ENCODE measurements at regions of chr10 and their contacts with region 1.

Region 1: GRCh38 chr10:104353325-104354048 is at the start of gene CFAP58:
- DNase-seq: peak; percentile 95 to 98 (median 96)
- H3K4me3 ChIP-seq: peak within 1 kb of the TSS in 1 of 4 donors; percentile 63
- H3K27ac ChIP-seq: peak within 1 kb of the TSS in 1 of 5 donors; percentile 33
- H3K4me1 ChIP-seq: peaks cover 16 to 29% of the 10 kb centered on the region in 2 donors
- H3K27me3 ChIP-seq: no peaks in the 10 kb centered on the region
- CTCF ChIP-seq: peak; percentile 55 to 86 (median 62)
- POLR2A ChIP-seq: peak in 1 of 2 donors; percentile 55
- total RNA-seq, gene CFAP58: 0.11 to 2.9 (median 0.83) TPM

Region 2: GRCh38 chr10:103685880-103686669 is 667.4 kb before region 1 on chr10:
- intact Hi-C with region 1: no loop called
- DNase-seq: peak; percentile 69 to 92 (median 78)
- H3K4me3 ChIP-seq: no peak overlapping the region
- H3K27ac ChIP-seq: peak overlapping the region in 2 of 5 donors; percentile 26 to 68
- H3K4me1 ChIP-seq: no peaks in the 10 kb centered on the region
- H3K27me3 ChIP-seq: no peaks in the 10 kb centered on the region
- CTCF ChIP-seq: peak; percentile 90 to 99 (median 94)
- POLR2A ChIP-seq: no peak

Region 3: GRCh38 chr10:104308439-104308903 is 45.0 kb before region 1 on chr10:
- intact Hi-C with region 1: loop called (anchors 5 kb)
- DNase-seq: no peak
- H3K4me3 ChIP-seq: no peak overlapping the region
- H3K27ac ChIP-seq: no peak overlapping the region
- H3K4me1 ChIP-seq: peaks cover 6 to 21% of the 10 kb centered on the region in 2 donors
- H3K27me3 ChIP-seq: no peaks in the 10 kb centered on the region
- CTCF ChIP-seq: no peak
- POLR2A ChIP-seq: no peak

Measured in adrenal gland (tissue), 19 donors.